ENCODE measurements at regions of chr22 and their contacts with region 1.

Region 1: DNA sequence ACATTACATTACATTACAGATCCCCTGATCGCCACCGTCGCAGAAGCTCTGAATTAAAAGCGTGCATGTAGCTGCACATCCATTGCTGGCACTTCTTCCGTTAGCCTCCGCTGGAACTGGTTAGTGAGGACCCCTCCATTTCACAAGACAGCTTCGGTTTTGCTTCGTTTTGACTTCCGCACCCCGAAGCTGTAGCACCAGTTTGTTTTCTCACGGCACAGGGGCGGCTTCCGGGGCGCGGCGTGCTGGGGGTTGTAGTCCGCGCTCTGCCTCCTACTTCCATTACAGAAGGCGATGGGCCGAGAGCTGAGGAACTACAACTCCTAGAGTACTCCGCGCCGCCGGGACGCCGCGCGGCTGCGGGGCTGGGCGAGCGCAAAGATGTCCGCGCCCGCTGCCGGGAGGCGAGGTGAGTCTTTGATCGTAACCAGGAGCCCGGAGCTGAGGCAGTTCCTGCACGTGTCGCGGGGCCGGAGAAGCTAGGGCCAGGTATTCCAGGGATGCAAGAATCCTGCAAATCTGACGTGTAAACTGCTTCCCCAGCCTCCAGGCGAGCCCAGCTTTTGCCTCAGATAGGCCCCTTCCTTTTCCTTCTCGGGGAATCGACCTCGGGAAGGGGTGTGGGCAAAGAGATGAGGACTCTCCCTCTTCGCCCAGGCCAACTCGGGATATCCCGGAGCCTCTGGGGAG is at the start of gene PEX26:
- DNase-seq: peak; percentile 97
- H3K4me3 ChIP-seq: peak within 1 kb of the TSS; percentile 62 to 96 (median 88)
- H3K27ac ChIP-seq: peak within 1 kb of the TSS; percentile 80 to 86 (median 83)
- H3K4me1 ChIP-seq: peaks cover 0 to 39% (median 38%) of the 10 kb centered on the region in 4 donors
- H3K27me3 ChIP-seq: no peaks in the 10 kb centered on the region
- CTCF ChIP-seq: no peak
- EP300 ChIP-seq: no peak
- POLR2A ChIP-seq: peak; percentile 15 to 35
- total RNA-seq, gene PEX26: 13.3 to 21.3 (median 17.7) TPM

Region 2: GRCh38 chr22:17628304-17629166 is 449.2 kb before region 1 on chr22 and contains the start of gene ATP6V1E1:
- intact Hi-C with region 1: loop called (anchors 5 kb)
- DNase-seq: peak; percentile 99
- H3K4me3 ChIP-seq: peak within 1 kb of the TSS; percentile 66 to 99 (median 88)
- H3K27ac ChIP-seq: peak within 1 kb of the TSS; percentile 88 to 92 (median 90)
- H3K4me1 ChIP-seq: peaks cover 0 to 32% (median 24%) of the 10 kb centered on the region in 4 donors
- H3K27me3 ChIP-seq: no peaks in the 10 kb centered on the region
- CTCF ChIP-seq: no peak
- EP300 ChIP-seq: peak in 1 of 4 donors; percentile 54
- POLR2A ChIP-seq: peak; percentile 67 to 95
- total RNA-seq, gene ATP6V1E1: 119 to 160 (median 138) TPM

Region 3: GRCh38 chr22:17742527-17742902 is 335.3 kb before region 1 on chr22:
- intact Hi-C with region 1: loop called (anchors 10 kb)
- DNase-seq: peak; percentile 77
- H3K4me3 ChIP-seq: no peak overlapping the region
- H3K27ac ChIP-seq: no peak overlapping the region
- H3K4me1 ChIP-seq: peaks cover 0 to 6% (median 4%) of the 10 kb centered on the region in 4 donors
- H3K27me3 ChIP-seq: no peaks in the 10 kb centered on the region
- CTCF ChIP-seq: peak; percentile 19 to 71 (median 50)
- EP300 ChIP-seq: no peak
- POLR2A ChIP-seq: no peak

Region 4: DNA sequence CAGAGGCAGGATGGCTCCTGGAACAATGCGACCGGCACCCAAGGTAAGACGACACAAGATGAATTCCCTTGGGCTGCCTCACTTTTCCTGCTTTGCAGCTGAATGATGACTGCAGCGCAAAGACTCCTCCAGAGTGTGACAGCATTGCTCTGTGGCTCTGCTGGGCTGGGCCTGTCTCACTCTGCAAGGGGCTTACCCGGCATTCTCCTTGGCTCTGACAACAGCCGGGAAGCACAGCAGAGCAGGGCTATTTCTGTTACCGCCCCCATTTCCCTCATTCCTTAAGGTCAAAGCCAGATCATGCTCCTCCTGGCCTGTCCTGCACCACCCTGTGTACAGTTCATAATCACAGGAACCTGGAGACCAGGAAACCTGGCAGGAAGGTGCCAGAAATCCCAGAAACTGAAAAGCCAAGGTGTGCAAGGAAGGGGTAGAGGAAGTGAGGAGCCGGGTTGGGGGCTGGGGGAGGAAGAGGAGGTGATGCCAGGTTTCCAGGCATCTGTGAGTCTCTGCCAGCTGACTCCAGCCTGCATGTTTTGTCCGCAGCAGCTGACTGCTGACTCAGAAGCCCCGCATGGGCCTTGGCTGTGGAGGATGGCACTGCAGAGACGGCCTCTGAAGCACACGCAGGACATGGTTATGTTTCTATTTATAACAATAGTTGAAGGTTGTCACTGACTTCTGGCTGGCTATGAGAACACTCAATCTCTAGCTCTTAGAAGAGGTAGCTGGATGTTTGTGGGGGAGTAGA is 167.0 kb before region 1 on chr22:
- intact Hi-C with region 1: loop called (anchors 5 kb)
- DNase-seq: peak; percentile 94
- H3K4me3 ChIP-seq: no peak overlapping the region
- H3K27ac ChIP-seq: peak overlapping the region; percentile 80 to 88 (median 86)
- H3K4me1 ChIP-seq: peaks cover 0 to 74% (median 63%) of the 10 kb centered on the region in 4 donors
- H3K27me3 ChIP-seq: no peaks in the 10 kb centered on the region
- CTCF ChIP-seq: no peak
- EP300 ChIP-seq: peak in 2 of 4 donors; percentile 63 to 89
- POLR2A ChIP-seq: no peak

Region 5: GRCh38 chr22:17994424-17995108 is 83.2 kb before region 1 on chr22:
- intact Hi-C with region 1: no loop called
- DNase-seq: peak; percentile 14
- H3K4me3 ChIP-seq: no peak overlapping the region
- H3K27ac ChIP-seq: no peak overlapping the region
- H3K4me1 ChIP-seq: peaks cover 0 to 72% (median 53%) of the 10 kb centered on the region in 4 donors
- H3K27me3 ChIP-seq: no peaks in the 10 kb centered on the region
- CTCF ChIP-seq: no peak
- EP300 ChIP-seq: no peak
- POLR2A ChIP-seq: no peak

Region 6: DNA sequence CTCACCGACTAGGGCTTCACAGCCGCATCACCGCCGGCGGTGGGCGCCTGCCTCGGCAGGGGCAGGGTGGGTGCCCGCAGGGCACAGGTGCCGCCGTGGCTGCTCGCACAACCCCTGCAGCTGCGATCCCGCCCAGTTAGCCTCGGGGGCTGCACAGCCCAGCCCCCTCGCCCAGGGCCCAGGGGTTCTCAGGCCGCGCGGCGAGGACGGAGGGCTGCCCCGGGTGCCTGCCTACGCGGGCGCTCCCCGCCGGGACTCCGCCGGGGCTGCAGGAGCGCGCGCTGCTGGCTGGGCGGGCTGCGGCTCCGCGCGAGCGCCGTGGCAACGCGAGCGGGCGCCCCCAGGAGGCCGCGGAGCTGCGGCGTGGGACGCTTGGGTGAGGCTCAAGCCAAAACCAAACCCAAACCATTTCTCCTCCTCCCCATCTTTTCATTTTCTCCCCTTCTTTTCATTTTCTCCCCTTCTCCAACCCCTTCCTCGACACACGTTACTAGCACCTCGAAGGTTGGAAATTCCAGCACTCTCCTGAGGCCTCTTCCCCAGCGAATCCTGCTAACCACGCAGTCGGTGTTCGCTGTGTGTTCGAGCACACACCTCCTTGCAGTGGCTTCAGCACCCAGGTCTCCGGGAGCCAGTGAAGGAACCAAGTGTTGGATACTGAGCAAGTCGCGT is 53.4 kb before region 1 on chr22 and contains the start of gene MICAL3:
- intact Hi-C with region 1: loop called (anchors 1 kb)
- DNase-seq: peak; percentile 77
- H3K4me3 ChIP-seq: peak within 1 kb of the TSS; percentile 51 to 78 (median 76)
- H3K27ac ChIP-seq: peak within 1 kb of the TSS; percentile 87 to 95 (median 90)
- H3K4me1 ChIP-seq: peaks cover 2 to 42% (median 26%) of the 10 kb centered on the region in 4 donors
- H3K27me3 ChIP-seq: no peaks in the 10 kb centered on the region
- CTCF ChIP-seq: peak in 3 of 4 experiments; percentile 14 to 58 (median 33)
- EP300 ChIP-seq: no peak
- POLR2A ChIP-seq: no peak
- total RNA-seq, gene MICAL3: 26.3 to 94.2 (median 45.0) TPM

Measured in sigmoid colon (tissue), 7 donors.